T-cell (primary cell): ENCODE measurements at regions of chr17 and their contacts with region 1.

Region 1: DNA sequence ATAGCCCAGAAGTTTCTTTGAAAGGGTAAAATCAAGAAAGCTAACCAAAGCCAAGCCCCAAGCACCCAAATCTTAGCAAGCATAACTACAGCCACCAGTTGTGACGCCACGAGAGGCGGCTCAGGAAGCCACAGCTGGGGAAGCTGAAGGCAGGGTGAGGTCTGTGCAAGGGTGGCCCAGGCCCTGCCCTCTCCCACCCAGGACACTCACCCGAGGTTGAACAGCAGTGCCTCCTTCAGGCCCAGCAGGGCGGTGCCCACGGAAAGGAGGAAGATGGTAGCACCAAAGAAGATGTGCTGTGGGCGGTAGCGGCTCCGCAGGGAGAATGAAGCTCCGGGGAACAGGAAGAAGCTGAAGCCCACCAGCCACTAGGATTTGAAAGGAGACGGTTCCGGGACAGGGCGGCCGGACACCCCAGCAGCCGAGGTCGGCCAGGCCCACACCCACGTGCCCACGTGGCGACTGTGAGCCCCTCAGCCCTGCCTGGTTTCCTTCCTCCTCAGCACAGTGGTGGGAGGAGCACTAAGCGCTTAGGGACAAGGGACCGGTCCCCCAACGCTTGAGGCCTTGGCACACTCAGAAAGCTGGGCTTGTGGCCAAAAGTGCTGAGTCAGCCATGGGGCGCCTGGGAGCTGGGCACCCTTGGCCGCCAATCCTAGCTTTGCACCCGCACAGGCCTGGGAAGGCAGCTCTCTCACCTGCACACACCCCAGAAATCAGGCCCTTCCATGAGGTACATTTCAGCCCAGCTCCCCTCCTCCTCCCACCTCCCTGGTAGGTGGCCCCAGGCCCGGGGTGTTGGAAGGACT is 11.0 kb downstream of the CYB561 start:
- DNase-seq: peak in 34 of 35 experiments; percentile 26 to 73 (median 60)
- ATAC-seq: peak; percentile 53 to 94 (median 66)
- H3K4me3 ChIP-seq: no peak overlapping the region
- H3K4me3 Mint-ChIP-seq: peak overlapping the region in 2 of 3 donors; percentile 9 to 48
- H3K27ac ChIP-seq: peak overlapping the region; percentile 64
- H3K27ac Mint-ChIP-seq: peak overlapping the region; percentile 83 to 86
- H3K4me1 ChIP-seq: peaks cover 6 to 61% of the 10 kb centered on the region in 2 experiments
- H3K4me1 Mint-ChIP-seq: peaks cover 17 to 50% (median 29%) of the 10 kb centered on the region in 3 donors
- H3K27me3 ChIP-seq: peaks cover 0 to 4% of the 10 kb centered on the region in 2 experiments
- H3K27me3 Mint-ChIP-seq: no peaks in the 10 kb centered on the region

Region 2: DNA sequence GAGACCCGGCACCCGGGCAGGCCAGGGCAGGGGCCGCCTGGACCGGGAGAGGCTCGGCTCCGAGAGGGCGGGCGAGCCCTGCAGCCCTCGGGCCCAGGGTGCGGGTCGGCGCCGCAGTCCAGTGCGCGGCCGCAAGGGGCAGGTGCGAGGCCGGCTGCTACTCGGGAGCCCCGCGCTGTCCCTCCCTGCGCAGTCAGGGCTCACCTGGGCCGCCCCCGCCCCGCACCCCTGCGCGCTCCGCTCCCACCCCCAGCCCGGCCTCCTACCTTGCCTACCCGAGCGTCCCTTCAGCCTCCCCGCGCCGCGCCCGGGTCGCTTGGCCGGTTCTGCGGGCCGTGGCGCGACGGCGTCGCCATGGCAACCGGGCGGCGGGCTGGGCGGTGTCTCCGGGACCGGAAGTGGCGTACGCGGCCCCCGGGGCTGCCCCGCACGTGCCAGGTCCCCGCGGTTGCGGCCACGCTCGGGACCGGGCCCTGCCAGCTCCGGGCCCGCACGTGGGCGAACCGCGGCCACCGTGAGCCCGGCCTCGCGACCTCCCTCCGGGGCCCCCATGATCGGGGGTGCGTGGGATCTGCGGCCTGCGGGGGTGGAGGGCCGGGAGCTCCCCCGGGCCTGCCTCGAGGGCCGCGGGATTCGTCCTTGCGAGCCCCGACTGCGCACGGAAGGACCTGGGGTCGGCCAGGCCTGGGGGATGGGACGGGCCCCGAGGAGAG is 11.1 kb after region 1 on chr17 and contains the start of gene CYB561:
- CTCF ChIA-PET with region 1: interaction called in 1 of 2 experiments, 11 read pairs
- POLR2A ChIA-PET with region 1: interaction called in 1 of 2 experiments, 4 read pairs
- DNase-seq: peak in 34 of 35 experiments; percentile 27 to 83 (median 46)
- ATAC-seq: peak; percentile 61 to 75 (median 70)
- H3K4me3 ChIP-seq: peak within 1 kb of the TSS; percentile 71 to 80
- H3K4me3 Mint-ChIP-seq: peak within 1 kb of the TSS; percentile 70 to 82 (median 76)
- H3K27ac ChIP-seq: peak within 1 kb of the TSS; percentile 96
- H3K27ac Mint-ChIP-seq: peak within 1 kb of the TSS; percentile 92 to 95
- H3K4me1 ChIP-seq: peaks cover 12 to 43% of the 10 kb centered on the region in 2 experiments
- H3K4me1 Mint-ChIP-seq: peaks cover 26 to 50% (median 27%) of the 10 kb centered on the region in 3 donors
- H3K27me3 ChIP-seq: peaks cover 2 to 15% of the 10 kb centered on the region in 2 experiments
- H3K27me3 Mint-ChIP-seq: no peaks in the 10 kb centered on the region
- total RNA-seq, gene CYB561: 15.5 to 64.1 (median 34.0) TPM